ENCODE measurements at regions of chr3 and their contacts with region 1.

Region 1: GRCh38 chr3:12663936-12664908 is at the start of gene RAF1:
- DNase-seq: peak; percentile 96 to 98 (median 98)
- ATAC-seq: peak; percentile 98
- H3K4me3 ChIP-seq: peak within 1 kb of the TSS; percentile 78
- H3K4me3 Mint-ChIP-seq: peak within 1 kb of the TSS; percentile 88 to 100 (median 98)
- H3K27ac ChIP-seq: peak within 1 kb of the TSS; percentile 95
- H3K27ac Mint-ChIP-seq: peak within 1 kb of the TSS; percentile 98 to 100 (median 99)
- H3K4me1 ChIP-seq: peaks cover 12 to 20% of the 10 kb centered on the region in 2 donors
- H3K4me1 Mint-ChIP-seq: peaks cover 19 to 44% (median 33%) of the 10 kb centered on the region in 7 donors
- H3K27me3 ChIP-seq: no peaks in the 10 kb centered on the region
- H3K27me3 Mint-ChIP-seq: no peaks in the 10 kb centered on the region
- total RNA-seq, gene RAF1: 93.4 to 129 (median 125) TPM

Region 2: GRCh38 chr3:12135029-12135657 is 529.1 kb before region 1 on chr3:
- CTCF ChIA-PET with region 1: no interaction called
- POLR2A ChIA-PET with region 1: no interaction called
- intact Hi-C with region 1: loop called in 1 of 2 experiments (anchors 5 kb)
- DNase-seq: peak; percentile 9 to 68 (median 47)
- ATAC-seq: peak; percentile 83
- H3K4me3 ChIP-seq: no peak overlapping the region
- H3K4me3 Mint-ChIP-seq: no peak overlapping the region
- H3K27ac ChIP-seq: no peak overlapping the region
- H3K27ac Mint-ChIP-seq: no peak overlapping the region
- H3K4me1 ChIP-seq: no peaks in the 10 kb centered on the region
- H3K4me1 Mint-ChIP-seq: no peaks in the 10 kb centered on the region
- H3K27me3 ChIP-seq: no peaks in the 10 kb centered on the region
- H3K27me3 Mint-ChIP-seq: peaks cover 16 to 29% (median 22%) of the 10 kb centered on the region in 5 donors

Region 3: GRCh38 chr3:12316776-12317243 is 347.4 kb before region 1 on chr3:
- CTCF ChIA-PET with region 1: no interaction called
- POLR2A ChIA-PET with region 1: no interaction called
- intact Hi-C with region 1: no loop called
- DNase-seq: no peak
- ATAC-seq: no peak
- H3K4me3 ChIP-seq: no peak overlapping the region
- H3K4me3 Mint-ChIP-seq: no peak overlapping the region
- H3K27ac ChIP-seq: no peak overlapping the region
- H3K27ac Mint-ChIP-seq: no peak overlapping the region
- H3K4me1 ChIP-seq: no peaks in the 10 kb centered on the region
- H3K4me1 Mint-ChIP-seq: peaks cover 0 to 3% (median 0%) of the 10 kb centered on the region in 7 donors
- H3K27me3 ChIP-seq: no peaks in the 10 kb centered on the region
- H3K27me3 Mint-ChIP-seq: peaks cover 5 to 14% (median 13%) of the 10 kb centered on the region in 5 donors

Region 4: DNA sequence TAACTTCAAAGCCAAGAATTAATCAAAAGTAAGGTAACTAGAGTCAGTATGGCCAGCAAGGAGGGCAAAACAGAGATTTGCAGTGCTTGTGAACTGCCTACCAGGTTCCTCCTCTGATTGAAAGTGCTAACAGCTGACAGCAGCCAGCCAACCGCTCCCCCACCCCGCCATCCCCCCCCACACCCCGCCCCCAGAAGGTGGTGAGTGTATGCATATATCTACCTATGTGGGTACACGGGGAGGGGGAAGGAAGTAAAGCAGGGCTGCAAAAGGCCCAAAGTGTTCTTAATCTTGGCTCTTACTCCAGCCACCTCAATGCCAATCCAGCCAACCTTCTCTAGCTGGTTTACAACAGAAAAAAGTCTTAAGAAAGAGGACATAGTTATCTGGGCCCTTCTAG is 51.0 kb before region 1 on chr3:
- CTCF ChIA-PET with region 1: no interaction called
- POLR2A ChIA-PET with region 1: no interaction called
- intact Hi-C with region 1: loop called in 1 of 2 experiments (anchors 5 kb)
- DNase-seq: peak in 3 of 9 donors; percentile 9 to 18 (median 14)
- ATAC-seq: no peak
- H3K4me3 ChIP-seq: no peak overlapping the region
- H3K4me3 Mint-ChIP-seq: peak overlapping the region in 3 of 10 donors; percentile 37 to 45 (median 44)
- H3K27ac ChIP-seq: peak overlapping the region; percentile 17
- H3K27ac Mint-ChIP-seq: peak overlapping the region in 8 of 9 donors; percentile 27 to 86 (median 76)
- H3K4me1 ChIP-seq: peaks cover 3 to 5% of the 10 kb centered on the region in 2 donors
- H3K4me1 Mint-ChIP-seq: peaks cover 17 to 65% (median 51%) of the 10 kb centered on the region in 7 donors
- H3K27me3 ChIP-seq: no peaks in the 10 kb centered on the region
- H3K27me3 Mint-ChIP-seq: no peaks in the 10 kb centered on the region

Region 5: DNA sequence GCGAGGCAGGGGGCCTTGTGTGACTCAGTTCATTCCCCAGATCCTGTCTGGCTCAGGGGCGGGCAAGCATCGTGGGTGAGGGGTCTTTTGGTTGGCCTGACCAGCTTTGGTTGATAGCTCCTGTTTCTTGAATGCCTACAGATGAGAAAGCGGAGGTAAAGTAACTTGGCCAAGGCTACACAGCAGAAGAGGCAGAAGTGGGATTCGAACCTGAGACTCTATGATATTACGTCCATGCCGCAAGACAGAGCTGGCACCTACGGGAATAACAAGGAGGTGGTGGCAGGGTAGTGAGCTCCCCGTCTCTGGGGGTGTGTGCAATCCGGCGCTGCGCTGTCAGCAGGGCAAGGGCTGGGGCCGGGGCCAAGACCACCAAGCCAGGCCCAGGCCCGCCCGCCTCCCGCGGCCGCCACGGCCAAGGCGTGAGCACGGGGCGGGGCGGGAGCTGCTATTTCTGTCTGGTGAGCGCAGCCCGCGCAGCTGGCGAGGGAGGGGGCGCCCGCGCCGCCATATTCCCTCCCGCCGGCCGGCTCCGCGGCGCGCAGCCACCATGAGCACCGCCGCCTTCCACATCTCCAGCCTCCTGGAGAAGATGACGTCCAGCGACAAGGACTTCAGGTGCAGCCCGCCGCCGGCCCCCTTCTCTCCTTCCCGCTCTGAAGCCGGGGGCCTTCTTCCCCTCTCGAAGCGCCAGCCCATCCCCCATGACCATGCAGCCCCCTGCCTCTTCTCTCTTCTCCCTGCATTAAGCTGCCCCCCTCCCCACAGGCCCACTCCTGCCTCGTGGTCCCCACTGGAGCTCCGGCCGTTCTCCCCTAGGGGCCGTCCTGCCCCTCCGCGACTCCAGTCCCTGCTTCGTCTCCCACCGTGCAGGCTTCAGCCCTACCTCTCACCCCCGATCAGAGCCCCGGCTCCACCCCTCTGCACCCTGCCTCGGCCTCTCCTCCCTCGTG is 132.2 kb after region 1 on chr3 and contains the start of gene CAND2:
- CTCF ChIA-PET with region 1: no interaction called
- POLR2A ChIA-PET with region 1: no interaction called
- intact Hi-C with region 1: loop called in 1 of 2 experiments (anchors 5 kb)
- DNase-seq: peak; percentile 22 to 58 (median 40)
- ATAC-seq: peak; percentile 82
- H3K4me3 ChIP-seq: peak within 1 kb of the TSS; percentile 66
- H3K4me3 Mint-ChIP-seq: peak within 1 kb of the TSS; percentile 74 to 95 (median 89)
- H3K27ac ChIP-seq: peak within 1 kb of the TSS; percentile 55
- H3K27ac Mint-ChIP-seq: peak within 1 kb of the TSS in 8 of 9 donors; percentile 76 to 97 (median 82)
- H3K4me1 ChIP-seq: peaks cover 0 to 5% of the 10 kb centered on the region in 2 donors
- H3K4me1 Mint-ChIP-seq: peaks cover 0 to 28% (median 11%) of the 10 kb centered on the region in 7 donors
- H3K27me3 ChIP-seq: no peaks in the 10 kb centered on the region
- H3K27me3 Mint-ChIP-seq: peaks cover 0 to 33% (median 6%) of the 10 kb centered on the region in 5 donors
- total RNA-seq, gene CAND2: 0.15 to 8.2 (median 4.3) TPM

Region 6: DNA sequence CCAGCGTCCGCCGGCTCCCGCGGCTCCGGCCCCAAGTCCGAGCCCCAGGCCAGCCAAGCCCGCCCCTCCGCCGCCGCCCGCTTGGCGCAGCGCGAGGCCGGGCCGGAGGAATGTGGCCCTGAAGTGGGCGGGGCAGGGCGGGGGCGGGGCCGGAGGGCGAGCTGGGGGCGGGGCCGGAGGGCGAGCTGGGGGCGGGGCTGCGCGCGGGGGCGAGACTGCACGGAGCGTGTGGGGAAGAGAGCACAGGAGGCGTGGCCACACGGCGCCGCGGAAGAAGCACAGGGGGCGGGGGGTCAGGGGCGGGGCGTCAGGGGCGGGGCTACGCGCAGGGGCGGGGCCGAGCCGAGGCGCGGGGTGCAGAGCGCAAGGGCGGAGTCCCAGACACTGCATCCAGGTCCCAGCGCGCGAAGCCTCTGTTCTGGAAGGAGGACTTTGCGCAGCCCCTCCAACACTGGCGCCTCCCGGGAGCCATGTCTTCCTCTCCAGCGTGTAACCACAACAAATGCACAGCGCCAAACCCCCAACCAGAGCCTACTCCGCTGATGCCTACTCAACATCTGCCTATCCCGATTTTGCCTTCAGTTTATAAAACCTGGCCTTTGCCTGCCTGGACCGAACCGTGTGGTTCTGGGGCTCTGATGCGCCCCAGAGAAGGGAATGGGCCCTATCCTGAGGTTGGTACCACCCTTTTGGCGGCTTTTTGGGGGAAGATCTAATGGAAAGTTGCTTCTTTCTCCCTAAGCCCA is 303.6 kb after region 1 on chr3:
- CTCF ChIA-PET with region 1: no interaction called
- POLR2A ChIA-PET with region 1: no interaction called
- intact Hi-C with region 1: loop called in 1 of 2 experiments (anchors 5 kb)
- DNase-seq: peak; percentile 71 to 87 (median 83)
- ATAC-seq: peak; percentile 99
- H3K4me3 ChIP-seq: peak overlapping the region; percentile 47
- H3K4me3 Mint-ChIP-seq: peak overlapping the region; percentile 74 to 87 (median 86)
- H3K27ac ChIP-seq: peak overlapping the region; percentile 29
- H3K27ac Mint-ChIP-seq: peak overlapping the region in 4 of 9 donors; percentile 9 to 84 (median 60)
- H3K4me1 ChIP-seq: peaks cover 47 to 53% of the 10 kb centered on the region in 2 donors
- H3K4me1 Mint-ChIP-seq: peaks cover 50 to 86% (median 77%) of the 10 kb centered on the region in 7 donors
- H3K27me3 ChIP-seq: no peaks in the 10 kb centered on the region
- H3K27me3 Mint-ChIP-seq: peaks cover 0 to 5% (median 0%) of the 10 kb centered on the region in 5 donors

Region 7: GRCh38 chr3:13879655-13880204 is 1215.5 kb after region 1 on chr3 and contains the start of gene WNT7A:
- CTCF ChIA-PET with region 1: no interaction called
- POLR2A ChIA-PET with region 1: no interaction called
- intact Hi-C with region 1: loop called in 1 of 2 experiments (anchors 5 kb)
- DNase-seq: peak in 5 of 9 donors; percentile 33 to 70 (median 49)
- ATAC-seq: peak; percentile 38
- H3K4me3 ChIP-seq: peak within 1 kb of the TSS; percentile 75
- H3K4me3 Mint-ChIP-seq: peak within 1 kb of the TSS; percentile 50 to 95 (median 92)
- H3K27ac ChIP-seq: peak within 1 kb of the TSS; percentile 75
- H3K27ac Mint-ChIP-seq: peak within 1 kb of the TSS in 7 of 9 donors; percentile 45 to 92 (median 82)
- H3K4me1 ChIP-seq: peaks cover 5 to 6% of the 10 kb centered on the region in 2 donors
- H3K4me1 Mint-ChIP-seq: peaks cover 0 to 29% (median 23%) of the 10 kb centered on the region in 7 donors
- H3K27me3 ChIP-seq: peaks cover 0 to 6% of the 10 kb centered on the region in 2 donors
- H3K27me3 Mint-ChIP-seq: peaks cover 0 to 78% (median 34%) of the 10 kb centered on the region in 5 donors
- total RNA-seq, gene WNT7A: 0.15 to 21.8 (median 18.8) TPM

Region 8: DNA sequence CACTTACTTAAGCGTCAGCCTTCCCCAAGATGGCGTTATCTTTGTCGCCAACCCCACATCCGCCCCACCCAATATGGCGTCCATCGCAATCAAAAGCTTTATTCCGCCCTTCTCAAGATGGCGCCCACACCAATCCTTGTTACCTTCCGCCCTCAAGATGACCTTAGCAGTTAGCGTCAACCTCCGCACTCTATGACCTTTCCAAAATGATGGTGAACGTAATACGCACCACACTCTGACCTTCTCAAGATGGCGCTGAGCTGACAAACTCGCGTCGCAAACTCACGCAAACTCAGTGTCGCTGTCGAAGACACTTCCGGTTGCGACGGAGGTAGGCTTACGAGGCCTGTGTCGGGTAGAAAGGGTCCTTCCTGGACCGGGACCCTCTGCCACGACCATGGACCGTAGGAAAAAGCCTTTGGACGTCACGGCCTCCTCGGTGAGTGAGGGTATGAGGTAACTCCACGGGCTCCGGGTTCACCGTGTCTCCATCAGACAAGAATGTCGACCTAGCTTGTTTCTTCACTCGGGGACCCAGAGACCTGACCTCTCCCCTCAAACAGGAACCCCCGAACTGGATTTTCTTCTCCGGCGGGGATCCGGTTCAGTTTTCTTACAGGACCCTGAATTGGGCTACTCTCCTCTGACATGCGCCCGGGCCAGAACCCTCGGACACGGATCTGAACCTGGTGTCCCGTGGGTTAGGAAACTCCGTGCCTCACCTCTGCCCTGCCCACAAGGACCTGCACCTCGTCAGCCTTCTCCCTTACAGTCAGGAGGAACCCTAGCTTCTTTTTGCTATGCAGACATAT is 1987.4 kb after region 1 on chr3 and contains the start of gene CCDC174:
- CTCF ChIA-PET with region 1: no interaction called
- POLR2A ChIA-PET with region 1: interaction called, 8 read pairs
- intact Hi-C with region 1: loop called in 1 of 2 experiments (anchors 10 kb)
- DNase-seq: peak; percentile 84 to 98 (median 96)
- ATAC-seq: peak; percentile 99
- H3K4me3 ChIP-seq: peak within 1 kb of the TSS; percentile 90
- H3K4me3 Mint-ChIP-seq: peak within 1 kb of the TSS; percentile 84 to 100 (median 96)
- H3K27ac ChIP-seq: peak within 1 kb of the TSS; percentile 94
- H3K27ac Mint-ChIP-seq: peak within 1 kb of the TSS; percentile 92 to 100 (median 98)
- H3K4me1 ChIP-seq: peaks cover 21 to 25% of the 10 kb centered on the region in 2 donors
- H3K4me1 Mint-ChIP-seq: peaks cover 25 to 80% (median 66%) of the 10 kb centered on the region in 7 donors
- H3K27me3 ChIP-seq: no peaks in the 10 kb centered on the region
- H3K27me3 Mint-ChIP-seq: peaks cover 0 to 2% (median 0%) of the 10 kb centered on the region in 5 donors
- total RNA-seq, gene CCDC174: 21.6 to 59.2 (median 46.2) TPM

Measured in naive thymus-derived CD4-positive, alpha-beta T cell (primary cell).